ENCODE measurements at regions of chr6 and their contacts with region 1.

Region 1: GRCh38 chr6:27503436-27504030 is 30.6 kb upstream of the ZNF184 start:
- DNase-seq: peak; percentile 91
- ATAC-seq: peak; percentile 25
- H3K4me3 ChIP-seq: peak overlapping the region; percentile 86
- H3K27ac ChIP-seq: peak overlapping the region; percentile 11; the same call in 1 of the 2 replicates
- H3K4me1 ChIP-seq: peaks cover 8% of the 10 kb centered on the region; the same call in 1 of the 2 replicates
- H3K27me3 ChIP-seq: no peaks in the 10 kb centered on the region
- CTCF ChIP-seq: no peak

Region 2: DNA sequence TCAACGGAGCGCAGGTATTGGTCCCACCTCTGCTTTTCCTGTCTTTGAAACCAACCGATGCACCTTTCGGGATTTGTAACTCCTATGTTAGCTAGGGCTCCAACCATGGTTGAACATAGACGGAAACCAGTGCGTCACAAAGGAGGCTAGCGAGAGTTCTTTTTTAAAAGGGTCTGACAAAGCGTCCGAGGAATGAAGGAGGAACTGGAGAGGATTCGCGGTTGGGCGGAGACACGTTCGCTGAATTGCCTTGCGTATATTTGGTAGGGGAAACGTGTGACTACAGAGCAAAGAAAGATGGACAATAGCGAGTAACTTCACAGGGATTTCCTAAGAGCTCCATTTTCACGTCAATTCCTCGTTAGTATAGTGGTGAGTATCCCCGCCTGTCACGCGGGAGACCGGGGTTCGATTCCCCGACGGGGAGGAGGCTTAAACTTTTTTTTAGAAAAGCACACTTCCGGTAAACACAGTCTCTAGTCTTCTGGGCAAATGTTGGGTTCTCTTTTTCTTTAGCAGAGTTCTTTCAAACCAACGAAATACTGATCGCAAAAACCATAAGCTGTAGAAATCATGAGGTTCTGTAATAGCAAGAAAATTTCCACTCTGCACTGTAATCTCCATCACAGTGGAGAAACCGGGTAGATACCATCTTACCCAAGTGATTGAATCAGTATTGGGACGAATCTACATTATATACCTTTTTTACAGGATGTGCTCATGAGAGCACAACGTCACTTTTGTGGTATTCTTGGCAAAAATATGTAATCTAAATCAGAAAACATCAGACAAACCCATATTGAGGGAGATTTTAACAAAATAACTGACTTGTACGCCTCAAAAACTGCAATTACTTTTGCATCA is 24.0 kb before region 1 on chr6:
- CTCF ChIA-PET with region 1: no interaction called
- POLR2A ChIA-PET with region 1: no interaction called
- intact Hi-C with region 1: loop called (anchors 1 kb)
- DNase-seq: peak; percentile 89
- ATAC-seq: peak; percentile 71
- H3K4me3 ChIP-seq: peak overlapping the region; percentile 83
- H3K27ac ChIP-seq: peak overlapping the region; percentile 81
- H3K4me1 ChIP-seq: peaks cover 8% of the 10 kb centered on the region; the same call in 1 of the 2 replicates
- H3K27me3 ChIP-seq: no peaks in the 10 kb centered on the region
- CTCF ChIP-seq: no peak

Region 3: DNA sequence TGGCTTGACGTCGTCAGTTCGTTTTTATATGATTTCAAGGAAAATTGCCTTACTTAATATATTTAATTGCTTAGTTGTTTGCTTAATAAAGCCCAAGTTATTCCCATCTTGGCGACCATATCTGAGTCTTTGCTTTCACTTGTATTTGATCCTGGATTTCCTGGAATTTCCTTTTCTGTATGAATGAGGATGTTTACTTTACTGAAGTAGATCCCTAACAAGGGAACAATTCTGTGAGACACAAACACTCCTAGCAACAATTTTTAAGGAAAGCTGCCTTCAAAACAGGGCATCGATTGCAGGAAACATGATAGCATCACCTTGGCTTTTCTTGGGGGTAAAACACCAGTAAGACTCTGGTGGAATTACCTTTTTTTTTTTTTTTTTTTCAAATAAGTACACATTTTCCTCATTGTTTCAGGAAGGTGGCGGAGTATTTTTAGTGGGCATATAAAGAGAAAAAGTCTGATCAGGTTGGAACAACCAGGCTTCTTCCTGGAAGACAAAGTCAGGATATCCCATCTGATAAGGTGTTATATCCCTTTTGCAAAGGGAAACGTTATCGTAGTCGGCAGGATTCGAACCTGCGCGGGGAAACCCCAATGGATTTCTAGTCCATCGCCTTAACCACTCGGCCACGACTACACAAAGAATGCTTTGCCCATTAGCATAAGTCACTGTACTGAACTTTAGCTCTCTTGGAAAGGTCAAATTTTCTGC is 37.8 kb after region 1 on chr6:
- CTCF ChIA-PET with region 1: interaction called, 10 read pairs
- POLR2A ChIA-PET with region 1: no interaction called
- intact Hi-C with region 1: no loop called
- DNase-seq: peak; percentile 61
- ATAC-seq: peak; percentile 42; the same call in 1 of the 2 replicates
- H3K4me3 ChIP-seq: peak overlapping the region; percentile 57
- H3K27ac ChIP-seq: no peak overlapping the region
- H3K4me1 ChIP-seq: peaks cover 38% of the 10 kb centered on the region
- H3K27me3 ChIP-seq: no peaks in the 10 kb centered on the region
- CTCF ChIP-seq: no peak